Activated naive CD8-positive, alpha-beta T cell treated with anti-CD3 and anti-CD28 coated beads, Interleukin-2, amount 10 ng/mL, durations not matched to agents 7 days and 5 days (primary cell): ENCODE measurements at regions of chr7 and their contacts with region 1.

Region 1: DNA sequence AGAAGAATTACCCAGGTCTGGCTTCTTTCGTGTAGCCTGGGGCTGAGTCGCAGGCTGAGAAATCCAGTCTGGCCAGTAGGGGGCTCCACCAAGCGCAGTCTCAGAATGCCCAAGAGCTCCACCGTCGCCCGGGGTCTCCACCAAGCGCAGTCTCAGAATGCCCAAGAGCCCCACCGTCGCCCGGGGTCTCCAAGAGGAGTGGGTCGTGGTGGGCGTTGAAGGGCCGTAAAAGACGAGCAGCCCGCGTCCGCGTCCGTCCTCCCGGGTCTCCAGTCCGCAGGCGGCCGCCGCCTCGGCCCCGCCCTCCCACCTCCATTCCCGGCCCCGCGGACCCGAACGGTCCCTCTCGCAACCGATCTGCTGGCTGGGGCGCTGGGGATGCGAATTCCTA is 895 bp upstream of the ZYX start:
- DNase-seq: peak; percentile 90
- ATAC-seq: peak; percentile 49
- H3K4me3 Mint-ChIP-seq: peak overlapping the region; percentile 86
- H3K27ac Mint-ChIP-seq: peak overlapping the region; percentile 92
- H3K4me1 Mint-ChIP-seq: peaks cover 46% of the 10 kb centered on the region
- H3K27me3 Mint-ChIP-seq: no peaks in the 10 kb centered on the region

Region 2: GRCh38 chr7:143287935-143288826 is 92.1 kb before region 1 on chr7 and contains the start of gene CASP2:
- POLR2A ChIA-PET with region 1: interaction called, 13 read pairs
- DNase-seq: peak; percentile 100
- ATAC-seq: peak; percentile 97
- H3K4me3 Mint-ChIP-seq: peak within 1 kb of the TSS; percentile 85
- H3K27ac Mint-ChIP-seq: peak within 1 kb of the TSS; percentile 92
- H3K4me1 Mint-ChIP-seq: peaks cover 42% of the 10 kb centered on the region
- H3K27me3 Mint-ChIP-seq: no peaks in the 10 kb centered on the region
- total RNA-seq, gene CASP2: 96.5 to 98.8 TPM

Region 3: DNA sequence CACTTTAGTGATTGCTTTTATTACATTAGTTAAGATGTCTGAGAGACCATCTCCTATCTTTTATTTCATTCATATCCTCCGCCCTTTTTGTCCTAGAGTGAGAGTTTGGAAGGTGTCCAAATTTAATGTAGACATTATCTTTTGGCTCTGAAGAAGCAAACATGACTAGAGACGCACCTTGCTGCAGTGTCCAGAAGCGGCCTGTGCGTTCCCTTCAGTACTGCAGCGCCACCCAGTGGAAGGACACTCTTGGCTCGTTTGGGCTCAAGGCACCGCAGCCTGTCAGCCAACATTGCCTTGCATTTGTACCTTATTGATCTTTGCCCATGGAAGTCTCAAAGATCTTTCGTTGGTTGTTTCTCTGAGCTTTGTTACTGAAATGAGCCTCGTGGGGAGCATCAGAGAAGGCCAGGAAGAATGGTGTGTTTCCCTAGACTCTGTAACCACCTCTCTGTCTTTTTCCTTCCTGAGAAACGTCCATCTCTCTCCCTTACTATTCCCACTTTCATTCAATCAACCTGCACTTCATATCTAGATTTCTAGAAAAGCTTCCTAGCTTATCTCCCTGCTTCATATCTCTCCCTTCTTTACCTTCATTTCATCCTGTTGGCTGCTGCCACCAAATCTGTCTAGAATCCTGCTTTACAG is 74.7 kb before region 1 on chr7:
- POLR2A ChIA-PET with region 1: interaction called, 15 read pairs
- DNase-seq: peak; percentile 69
- ATAC-seq: peak; percentile 53
- H3K4me3 Mint-ChIP-seq: no peak overlapping the region
- H3K27ac Mint-ChIP-seq: peak overlapping the region; percentile 19
- H3K4me1 Mint-ChIP-seq: peaks cover 38% of the 10 kb centered on the region
- H3K27me3 Mint-ChIP-seq: no peaks in the 10 kb centered on the region

Region 4: GRCh38 chr7:143331179-143331820 is 49.0 kb before region 1 on chr7:
- POLR2A ChIA-PET with region 1: no interaction called
- DNase-seq: no peak
- ATAC-seq: no peak
- H3K4me3 Mint-ChIP-seq: no peak overlapping the region
- H3K27ac Mint-ChIP-seq: no peak overlapping the region
- H3K4me1 Mint-ChIP-seq: no peaks in the 10 kb centered on the region
- H3K27me3 Mint-ChIP-seq: peaks cover 13% of the 10 kb centered on the region

Region 5: DNA sequence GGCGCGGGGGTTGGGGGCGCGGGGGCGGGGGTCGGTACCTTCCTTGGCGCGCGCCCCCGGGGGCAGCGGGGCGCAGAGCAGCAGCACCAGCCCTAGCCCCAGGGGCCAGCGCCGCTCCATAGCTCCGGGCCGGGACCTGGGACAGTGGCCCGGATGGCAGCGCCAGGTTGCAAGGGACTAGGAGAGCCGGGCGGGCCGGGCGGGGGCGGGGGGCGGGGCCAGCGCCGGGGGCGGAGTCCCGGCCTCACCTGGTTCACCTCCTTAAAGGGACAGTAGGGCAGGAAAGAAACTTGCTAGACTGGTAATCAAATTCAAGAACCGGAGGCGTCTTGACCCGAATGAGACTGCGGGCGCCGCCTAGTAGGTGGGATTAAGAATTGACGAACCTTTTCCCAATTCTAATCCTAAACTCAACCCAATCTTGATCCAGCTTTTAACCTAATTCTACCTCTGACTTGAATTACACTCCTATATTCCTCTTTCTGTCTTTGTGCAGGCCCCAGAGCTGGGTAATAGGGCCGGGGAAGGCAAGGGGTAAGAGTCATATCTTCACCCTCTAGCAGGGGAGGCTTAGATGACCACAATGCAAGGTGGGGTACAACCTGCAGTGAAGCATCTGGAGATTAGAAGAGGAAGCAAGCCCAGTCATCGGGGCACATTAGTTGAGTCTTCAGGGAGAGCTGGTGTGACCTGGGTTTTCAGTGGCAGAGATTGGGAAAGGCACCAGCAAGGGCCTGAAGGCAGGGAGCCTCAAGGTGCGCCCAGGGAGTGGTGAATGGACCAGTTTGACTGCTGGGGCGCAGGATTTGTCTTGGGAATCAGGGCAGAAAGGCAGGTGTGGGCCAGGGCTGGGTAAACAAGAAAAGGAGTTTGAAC is 28.7 kb after region 1 on chr7 and contains the start of gene EPHA1:
- POLR2A ChIA-PET with region 1: interaction called, 44 read pairs
- DNase-seq: peak; percentile 45
- ATAC-seq: peak; percentile 71
- H3K4me3 Mint-ChIP-seq: peak within 1 kb of the TSS; percentile 89
- H3K27ac Mint-ChIP-seq: peak within 1 kb of the TSS; percentile 87
- H3K4me1 Mint-ChIP-seq: peaks cover 33% of the 10 kb centered on the region
- H3K27me3 Mint-ChIP-seq: peaks cover 2% of the 10 kb centered on the region
- total RNA-seq, gene EPHA1: 27.3 to 28.2 TPM

Region 6: GRCh38 chr7:143458263-143458662 is 78.0 kb after region 1 on chr7:
- POLR2A ChIA-PET with region 1: no interaction called
- DNase-seq: no peak
- ATAC-seq: no peak
- H3K4me3 Mint-ChIP-seq: no peak overlapping the region
- H3K27ac Mint-ChIP-seq: no peak overlapping the region
- H3K4me1 Mint-ChIP-seq: peaks cover under 1% of the 10 kb centered on the region
- H3K27me3 Mint-ChIP-seq: no peaks in the 10 kb centered on the region